Mammary epithelial cell (primary cell): ENCODE measurements at regions of chr17 and their contacts with region 1.

Region 1: DNA sequence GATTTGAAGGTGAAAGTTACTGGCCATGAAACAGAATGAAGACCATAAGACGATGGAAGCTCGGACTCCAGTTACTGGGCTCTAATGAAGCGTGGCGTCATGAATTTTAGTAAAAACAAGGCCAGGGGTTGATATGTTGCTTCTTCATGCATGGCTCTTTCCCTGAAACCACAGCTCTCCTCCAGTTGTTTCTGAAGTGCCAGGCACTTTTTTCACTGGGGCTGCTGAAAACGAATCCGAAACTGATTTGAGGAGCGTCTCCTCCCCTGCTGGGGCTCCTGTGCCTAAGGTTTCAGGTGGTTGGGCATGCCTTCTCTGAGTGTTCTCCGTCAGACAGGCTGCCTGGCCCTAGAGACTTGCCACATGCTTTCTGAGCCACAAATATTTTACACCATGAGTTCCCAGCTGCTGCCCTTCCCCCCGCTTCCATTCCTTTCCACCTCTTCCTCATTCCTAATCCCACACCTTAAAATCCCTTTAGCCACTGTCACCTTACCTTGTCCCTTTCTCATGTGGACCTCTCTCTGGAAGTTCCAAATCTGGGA is 3.7 kb upstream of the MYL4 start:
- DNase-seq: peak; percentile 80
- H3K4me3 ChIP-seq: no peak overlapping the region
- H3K27ac ChIP-seq: no peak overlapping the region
- H3K4me1 ChIP-seq: peaks cover 17% of the 10 kb centered on the region
- H3K27me3 ChIP-seq: no peaks in the 10 kb centered on the region
- CTCF ChIP-seq: no peak

Region 2: GRCh38 chr17:47188876-47189731 is 16.4 kb before region 1 on chr17 and contains the start of gene CDC27:
- CTCF ChIA-PET with region 1: no interaction called
- dilution Hi-C with region 1: no loop called
- in situ Hi-C with region 1: no loop called
- intact Hi-C with region 1: loop called (anchors 2 kb)
- DNase-seq: peak; percentile 94
- H3K4me3 ChIP-seq: peak within 1 kb of the TSS; percentile 64 to 75 (median 70)
- H3K27ac ChIP-seq: peak within 1 kb of the TSS; percentile 85
- H3K4me1 ChIP-seq: no peaks in the 10 kb centered on the region
- H3K27me3 ChIP-seq: no peaks in the 10 kb centered on the region
- CTCF ChIP-seq: no peak
- total RNA-seq, gene CDC27: 80.7 to 128 TPM